Breast epithelium (tissue), 4 donors: ENCODE measurements at regions of chr20 and their contacts with region 1.

Region 1: DNA sequence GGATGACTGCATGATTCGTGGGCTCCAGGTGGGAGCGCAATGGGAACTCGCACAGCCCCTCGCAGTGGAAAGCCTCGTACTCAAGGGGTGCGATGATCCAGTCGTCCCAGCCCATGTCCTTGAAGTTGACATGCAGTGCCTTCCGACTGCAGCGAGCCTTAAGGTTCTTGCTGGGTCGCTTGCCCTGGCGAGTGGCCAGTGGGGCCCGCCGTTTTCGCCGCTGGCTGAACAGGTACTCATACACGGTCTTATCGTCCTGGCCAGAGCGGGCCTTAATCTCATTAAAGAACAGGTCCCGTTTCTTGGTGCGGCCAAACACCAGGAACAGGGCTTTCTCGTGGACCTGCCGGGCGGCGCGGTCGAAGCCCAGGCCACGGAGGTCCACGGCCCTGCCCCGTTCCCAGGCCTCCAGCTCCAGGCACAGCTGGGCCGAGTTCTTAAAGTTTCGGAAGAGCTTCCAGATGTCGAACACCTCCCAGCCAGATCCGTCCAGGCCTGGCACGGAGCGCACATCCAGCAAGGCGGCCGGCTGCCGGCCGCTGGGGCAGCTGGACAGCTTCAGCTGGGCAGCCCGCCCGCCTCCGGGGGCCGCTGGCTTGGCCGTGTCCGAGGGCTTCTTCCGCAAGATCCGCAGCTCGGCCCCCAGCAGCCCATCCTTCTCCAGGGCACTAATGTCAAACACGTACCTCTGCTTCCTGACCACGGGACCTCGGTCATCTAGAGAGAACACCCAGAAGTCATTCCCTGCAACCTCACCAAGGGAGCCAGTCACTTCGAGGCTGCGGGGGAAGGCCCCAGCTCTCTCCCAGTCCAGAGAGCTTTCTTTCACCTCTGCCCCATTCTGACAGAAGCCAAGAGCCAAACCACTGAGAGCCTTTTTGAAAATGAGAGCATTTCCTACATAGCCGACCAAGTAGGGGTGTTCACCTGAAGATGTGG is 3.7 kb downstream of the GDF5 start:
- DNase-seq: no peak
- H3K4me3 ChIP-seq: peak overlapping the region in 1 of 3 donors; percentile 34
- H3K27ac ChIP-seq: no peak overlapping the region
- H3K4me1 ChIP-seq: no peaks in the 10 kb centered on the region
- H3K27me3 ChIP-seq: no peaks in the 10 kb centered on the region
- CTCF ChIP-seq: no peak
- POLR2A ChIP-seq: no peak

Region 2: GRCh38 chr20:35306931-35307517 is 127.3 kb before region 1 on chr20:
- intact Hi-C with region 1: loop called (anchors 5 kb)
- DNase-seq: no peak
- H3K4me3 ChIP-seq: no peak overlapping the region
- H3K27ac ChIP-seq: peak overlapping the region; percentile 81 to 84
- H3K4me1 ChIP-seq: peaks cover 4 to 18% of the 10 kb centered on the region in 2 donors
- H3K27me3 ChIP-seq: no peaks in the 10 kb centered on the region
- CTCF ChIP-seq: peak in 1 of 3 donors; percentile 46
- POLR2A ChIP-seq: no peak

Region 3: GRCh38 chr20:35345189-35345588 is 89.1 kb before region 1 on chr20:
- intact Hi-C with region 1: no loop called
- DNase-seq: no peak
- H3K4me3 ChIP-seq: no peak overlapping the region
- H3K27ac ChIP-seq: peak overlapping the region in 1 of 2 donors; percentile 51
- H3K4me1 ChIP-seq: peaks cover 0 to 9% of the 10 kb centered on the region in 2 donors
- H3K27me3 ChIP-seq: no peaks in the 10 kb centered on the region
- CTCF ChIP-seq: no peak
- POLR2A ChIP-seq: no peak

Region 4: GRCh38 chr20:35502352-35502751 is 68.0 kb after region 1 on chr20:
- intact Hi-C with region 1: no loop called
- DNase-seq: no peak
- H3K4me3 ChIP-seq: no peak overlapping the region
- H3K27ac ChIP-seq: no peak overlapping the region
- H3K4me1 ChIP-seq: peaks cover 0 to 1% of the 10 kb centered on the region in 2 donors
- H3K27me3 ChIP-seq: no peaks in the 10 kb centered on the region
- CTCF ChIP-seq: no peak
- POLR2A ChIP-seq: no peak